ENCODE measurements at regions of chr14 and their contacts with region 1.

Region 1: DNA sequence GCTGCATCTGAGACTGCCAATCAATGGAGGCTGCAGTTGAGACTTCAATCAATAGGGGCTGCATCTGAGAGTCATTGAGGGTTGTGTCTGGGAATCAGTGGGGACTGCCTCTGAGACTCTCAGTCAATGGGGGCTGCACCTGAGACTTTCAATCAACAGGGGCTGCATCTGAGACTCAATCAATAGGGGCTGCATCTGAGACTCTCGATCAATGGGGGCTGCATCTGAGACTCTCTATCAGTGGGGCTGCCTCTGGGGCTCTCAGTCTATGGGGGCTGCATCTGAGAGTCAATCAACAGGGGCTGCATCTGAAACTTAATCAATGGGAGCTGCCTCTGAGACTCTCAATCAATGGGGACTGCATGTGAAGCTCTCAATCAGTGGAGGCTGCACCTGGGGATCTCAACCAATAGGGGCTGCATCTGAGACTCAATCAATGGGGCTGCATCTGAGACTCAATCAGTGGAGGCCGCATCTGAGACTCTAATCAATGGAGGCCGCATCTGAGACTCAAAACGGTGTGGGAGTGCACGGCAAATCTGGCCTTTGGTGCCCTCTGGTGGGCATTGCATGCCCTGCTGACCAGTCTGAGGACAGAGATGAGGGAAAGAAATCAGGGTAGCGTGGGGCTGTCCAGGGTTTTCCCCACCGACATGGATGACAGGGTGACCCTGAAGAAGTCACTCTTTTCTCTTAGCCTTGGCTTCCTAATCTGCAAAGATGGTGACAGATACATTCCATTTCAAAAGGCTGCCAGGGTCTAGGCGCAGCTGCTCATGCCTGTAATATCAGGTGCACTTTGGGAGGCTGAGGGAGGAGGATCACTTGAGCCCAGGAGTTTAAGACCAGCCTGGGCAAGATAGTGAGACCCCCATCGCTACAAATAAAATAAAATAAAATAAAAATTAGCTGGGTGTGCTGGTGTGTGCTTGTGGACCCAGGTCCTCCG is 41.3 kb upstream of the EIF5 start:
- DNase-seq: no peak
- H3K4me3 ChIP-seq: no peak overlapping the region
- H3K27ac ChIP-seq: no peak overlapping the region
- H3K4me1 ChIP-seq: no peaks in the 10 kb centered on the region
- H3K27me3 ChIP-seq: peaks cover 0 to 48% (median 0%) of the 10 kb centered on the region in 4 donors
- CTCF ChIP-seq: peak; percentile 72 to 96 (median 93)
- POLR2A ChIP-seq: no peak

Region 2: GRCh38 chr14:103078093-103078749 is 214.5 kb before region 1 on chr14:
- intact Hi-C with region 1: loop called (anchors 5 kb)
- DNase-seq: no peak
- H3K4me3 ChIP-seq: no peak overlapping the region
- H3K27ac ChIP-seq: no peak overlapping the region
- H3K4me1 ChIP-seq: peaks cover 15 to 31% (median 22%) of the 10 kb centered on the region in 3 donors
- H3K27me3 ChIP-seq: peaks cover 0 to 19% (median 0%) of the 10 kb centered on the region in 4 donors
- CTCF ChIP-seq: peak; percentile 20 to 88 (median 79)
- POLR2A ChIP-seq: no peak

Region 3: DNA sequence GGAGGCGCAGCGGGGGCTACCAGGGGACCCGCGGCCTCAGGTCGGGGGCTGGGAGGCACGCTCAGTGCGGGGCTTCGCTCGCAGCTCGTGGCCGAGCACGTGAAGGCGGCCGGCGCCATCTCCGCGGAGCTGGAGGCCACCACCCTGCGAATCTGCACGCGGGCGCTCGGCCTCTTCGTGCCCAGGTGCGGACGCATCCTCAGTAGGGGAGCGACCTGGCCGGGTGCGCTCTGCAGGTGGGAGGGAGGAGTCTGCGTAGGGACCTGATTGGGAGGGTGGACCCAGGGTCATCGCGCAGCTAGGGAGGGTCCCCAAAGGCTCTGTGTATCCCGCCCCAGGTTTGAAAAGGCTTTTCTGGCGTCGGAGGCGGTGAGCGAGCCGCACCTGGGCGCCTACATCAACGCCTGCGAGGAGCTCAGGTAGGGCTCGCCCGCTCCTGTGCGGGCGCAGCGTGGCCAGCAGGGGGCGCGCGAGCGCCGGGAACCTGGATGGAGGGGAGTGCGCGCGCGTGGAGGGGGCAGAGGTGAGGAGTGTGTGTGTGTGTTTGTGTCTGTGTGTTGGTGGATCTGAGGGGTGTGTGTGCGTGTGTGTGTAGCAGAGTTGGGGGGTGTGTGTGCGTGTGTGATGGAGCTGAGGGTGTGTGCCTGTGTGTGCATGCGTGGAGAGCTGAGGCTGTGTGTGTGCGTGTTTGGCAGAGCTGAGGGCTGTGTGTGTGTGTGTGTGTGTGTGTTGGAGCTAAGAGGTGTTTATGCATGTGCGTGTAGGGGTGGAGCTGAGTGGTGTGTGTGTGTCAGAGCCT is 187.8 kb before region 1 on chr14:
- intact Hi-C with region 1: loop called (anchors 5 kb)
- DNase-seq: no peak
- H3K4me3 ChIP-seq: peak overlapping the region in 2 of 4 donors; percentile 7 to 58
- H3K27ac ChIP-seq: no peak overlapping the region
- H3K4me1 ChIP-seq: peaks cover 35 to 50% (median 44%) of the 10 kb centered on the region in 3 donors
- H3K27me3 ChIP-seq: peaks cover 5 to 56% (median 11%) of the 10 kb centered on the region in 4 donors
- CTCF ChIP-seq: peak; percentile 96 to 99 (median 98)
- POLR2A ChIP-seq: no peak

Region 4: GRCh38 chr14:103185051-103185992 is 107.4 kb before region 1 on chr14:
- intact Hi-C with region 1: loop called (anchors 10 kb)
- DNase-seq: no peak
- H3K4me3 ChIP-seq: no peak overlapping the region
- H3K27ac ChIP-seq: peak overlapping the region in 3 of 4 donors; percentile 12 to 63 (median 62)
- H3K4me1 ChIP-seq: peaks cover 8 to 40% (median 10%) of the 10 kb centered on the region in 3 donors
- H3K27me3 ChIP-seq: peaks cover 0 to 49% (median 2%) of the 10 kb centered on the region in 4 donors
- CTCF ChIP-seq: peak; percentile 19 to 86 (median 72)
- POLR2A ChIP-seq: no peak

Region 5: DNA sequence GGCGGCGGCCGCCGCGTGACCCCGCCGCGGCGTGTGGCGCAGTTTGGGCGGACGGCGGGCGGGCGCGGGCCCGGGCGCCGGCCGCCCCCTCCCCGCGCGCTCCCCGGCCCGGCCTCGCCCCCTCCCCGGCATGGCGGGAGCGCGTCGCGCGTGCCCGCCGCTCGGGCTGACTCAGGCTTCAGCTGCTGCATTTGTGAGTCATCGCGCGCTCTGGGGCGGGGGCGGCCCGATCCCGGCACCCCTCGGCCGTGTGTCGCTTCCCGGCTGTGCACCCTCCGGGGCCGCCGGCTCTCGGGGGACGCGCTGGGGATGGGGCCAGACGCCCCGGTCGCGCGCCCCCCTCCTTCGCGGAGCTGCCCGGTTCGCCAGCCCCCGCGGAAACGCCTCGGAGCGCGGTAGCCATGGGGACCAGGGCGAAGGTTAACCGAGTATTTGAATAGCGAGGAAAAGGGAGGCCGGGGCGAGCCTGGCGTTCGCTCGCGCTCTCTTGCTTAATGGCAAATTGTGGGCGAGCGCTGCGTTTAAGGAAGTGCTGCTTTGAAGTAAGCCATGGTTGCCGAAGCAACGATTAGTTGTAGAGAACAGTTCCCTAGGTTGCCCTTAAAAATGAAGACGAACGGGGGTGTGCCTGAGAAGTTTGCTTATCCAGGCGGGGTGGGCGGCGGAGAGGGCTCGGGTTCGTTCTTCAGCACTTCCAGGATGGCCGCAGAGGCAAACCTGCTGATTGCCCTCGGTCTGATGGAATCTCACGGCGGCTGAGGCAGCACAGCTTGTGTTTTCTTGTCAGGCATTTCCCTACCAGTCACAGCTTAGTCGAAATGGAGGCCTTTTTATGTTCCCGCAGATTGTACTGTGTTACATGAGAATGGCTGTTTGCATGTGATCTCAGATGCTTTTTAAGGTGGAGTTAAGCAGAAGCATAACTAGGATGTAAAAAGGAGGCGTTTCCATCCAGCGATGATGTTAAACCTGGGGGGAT is 42.2 kb after region 1 on chr14:
- intact Hi-C with region 1: no loop called
- DNase-seq: peak; percentile 27
- H3K4me3 ChIP-seq: peak overlapping the region; percentile 89 to 100 (median 96)
- H3K27ac ChIP-seq: peak overlapping the region; percentile 99 to 100 (median 100)
- H3K4me1 ChIP-seq: peaks cover 4 to 44% (median 23%) of the 10 kb centered on the region in 3 donors
- H3K27me3 ChIP-seq: no peaks in the 10 kb centered on the region
- CTCF ChIP-seq: no peak
- POLR2A ChIP-seq: peak in 1 of 4 donors; percentile 37

Region 6: DNA sequence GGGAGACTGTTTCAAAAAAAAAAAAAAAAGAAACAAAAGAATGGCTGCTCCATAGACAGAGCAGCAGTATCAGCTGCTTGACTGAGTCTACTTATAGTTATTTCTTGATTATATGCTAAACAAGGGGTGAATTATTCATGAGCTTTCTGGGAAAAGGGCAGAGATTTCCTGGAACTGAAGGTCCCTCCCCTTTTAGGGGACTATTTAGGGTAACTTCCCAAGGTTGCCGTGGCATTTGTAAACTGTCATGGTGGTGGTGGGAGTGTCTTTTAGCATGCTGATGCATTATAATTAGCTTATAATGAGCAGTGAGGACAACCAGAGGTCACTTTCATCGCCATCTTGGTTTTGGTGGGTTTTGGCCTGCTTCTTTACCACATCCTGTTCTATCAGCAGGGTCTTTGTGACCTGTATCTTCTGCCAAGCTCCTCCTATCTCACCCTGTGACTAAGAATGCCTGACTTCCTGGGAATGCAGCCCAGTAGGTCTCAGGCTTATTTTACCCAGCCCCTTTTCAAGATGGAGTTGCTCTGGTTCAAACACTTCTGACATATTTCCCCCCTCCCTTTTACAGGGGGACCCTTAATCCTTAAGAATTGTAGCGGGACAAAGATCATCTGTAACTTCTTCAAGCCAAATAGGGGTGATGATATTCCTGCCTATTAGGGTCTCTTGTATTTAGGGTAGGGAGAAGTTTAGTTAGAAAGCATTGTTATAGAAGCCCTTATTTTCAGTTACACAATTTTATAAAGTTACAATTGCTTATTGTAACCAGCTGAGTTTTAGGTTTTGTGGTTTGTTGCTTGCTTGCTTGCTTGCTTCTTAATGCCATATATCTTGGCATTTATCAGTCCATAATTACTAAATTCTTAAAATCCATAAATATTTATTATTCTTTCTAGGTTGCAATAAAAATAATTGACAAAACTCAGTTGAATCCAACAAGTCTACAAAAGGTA is 135.1 kb after region 1 on chr14:
- intact Hi-C with region 1: no loop called
- DNase-seq: no peak
- H3K4me3 ChIP-seq: no peak overlapping the region
- H3K27ac ChIP-seq: no peak overlapping the region
- H3K4me1 ChIP-seq: peaks cover 0 to 47% (median 13%) of the 10 kb centered on the region in 3 donors
- H3K27me3 ChIP-seq: no peaks in the 10 kb centered on the region
- CTCF ChIP-seq: no peak
- POLR2A ChIP-seq: no peak

Region 7: DNA sequence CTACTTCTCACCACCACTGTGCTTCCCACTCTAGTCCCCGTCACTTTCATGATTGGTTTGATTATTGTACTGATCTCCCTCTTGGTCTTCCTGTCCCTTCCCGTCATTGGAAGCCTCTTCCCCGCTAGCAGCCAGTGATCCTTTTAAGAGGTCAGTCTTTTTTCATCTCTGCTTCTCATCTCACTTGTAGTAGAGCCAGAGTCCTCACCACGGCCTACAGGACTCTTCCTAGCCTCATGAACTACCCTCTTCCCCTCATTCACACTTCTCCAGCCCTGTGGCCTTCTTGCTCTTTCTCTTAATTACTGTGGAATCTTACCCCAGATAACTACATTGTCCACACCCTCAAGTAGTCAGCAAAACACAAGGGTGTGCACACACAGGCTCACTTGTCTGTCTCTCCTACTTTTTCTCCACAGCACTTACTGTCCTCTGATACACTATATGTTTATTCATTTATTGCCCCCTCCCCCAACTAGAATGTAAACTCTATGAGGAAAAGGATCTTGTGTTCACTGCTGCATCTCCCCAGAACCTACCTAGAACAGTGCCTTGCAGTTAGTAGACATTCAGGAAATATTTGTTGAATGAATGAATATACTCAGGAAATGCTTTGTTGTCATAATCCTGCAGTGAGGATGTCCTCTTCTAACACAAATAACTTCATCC is 163.6 kb after region 1 on chr14:
- intact Hi-C with region 1: no loop called
- DNase-seq: no peak
- H3K4me3 ChIP-seq: no peak overlapping the region
- H3K27ac ChIP-seq: no peak overlapping the region
- H3K4me1 ChIP-seq: peaks cover 0 to 12% (median 0%) of the 10 kb centered on the region in 3 donors
- H3K27me3 ChIP-seq: no peaks in the 10 kb centered on the region
- CTCF ChIP-seq: no peak
- POLR2A ChIP-seq: no peak

Region 8: GRCh38 chr14:103663506-103663905 is 370.8 kb after region 1 on chr14:
- intact Hi-C with region 1: no loop called
- DNase-seq: no peak
- H3K4me3 ChIP-seq: no peak overlapping the region
- H3K27ac ChIP-seq: peak overlapping the region in 2 of 4 donors; percentile 16 to 63
- H3K4me1 ChIP-seq: peaks cover 0 to 25% (median 0%) of the 10 kb centered on the region in 3 donors
- H3K27me3 ChIP-seq: no peaks in the 10 kb centered on the region
- CTCF ChIP-seq: no peak
- POLR2A ChIP-seq: no peak